ENCODE measurements at regions of chr19 and their contacts with region 1.

Region 1: DNA sequence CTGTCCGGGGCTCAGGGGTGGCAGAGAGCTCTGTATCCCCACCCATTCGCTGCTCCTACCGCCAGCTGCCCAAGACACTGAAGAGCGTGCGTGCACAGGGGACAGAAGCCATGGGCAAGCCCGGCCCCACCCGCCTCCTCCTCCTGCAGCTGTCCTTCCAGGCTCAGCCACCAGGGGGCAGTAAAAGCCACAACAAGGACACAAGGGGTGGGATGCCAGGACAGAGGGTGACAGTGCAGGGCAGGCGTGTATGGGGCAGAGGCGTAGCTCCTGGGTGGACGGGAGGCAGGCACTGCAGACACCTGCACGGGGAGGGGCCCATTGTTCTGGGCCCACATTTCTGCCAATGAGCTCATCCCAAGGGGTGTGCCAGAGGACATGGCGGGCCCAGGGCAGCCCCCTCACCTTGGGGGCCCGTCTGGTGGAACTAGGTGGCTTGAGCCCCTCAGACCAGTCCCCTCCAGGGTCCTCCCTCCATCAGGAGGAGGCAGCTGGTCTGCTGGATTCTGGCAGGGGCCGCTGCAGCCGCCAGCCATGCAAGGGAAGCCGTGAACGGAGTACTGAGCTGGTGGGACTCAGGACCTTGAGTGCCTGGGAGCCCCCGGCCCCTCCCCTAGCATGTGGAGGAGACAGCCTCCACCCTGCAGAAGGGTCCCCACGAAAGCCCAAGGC is 61.1 kb downstream of the MLLT1 start:
- DNase-seq: no peak
- H3K4me3 ChIP-seq: no peak overlapping the region
- CTCF ChIP-seq: peak; percentile 97

Region 2: GRCh38 chr19:6161271-6161850 is 57.3 kb before region 1 on chr19:
- CTCF ChIA-PET with region 1: no interaction called
- POLR2A ChIA-PET with region 1: no interaction called
- DNase-seq: no peak
- H3K4me3 ChIP-seq: no peak overlapping the region
- CTCF ChIP-seq: no peak

Region 3: DNA sequence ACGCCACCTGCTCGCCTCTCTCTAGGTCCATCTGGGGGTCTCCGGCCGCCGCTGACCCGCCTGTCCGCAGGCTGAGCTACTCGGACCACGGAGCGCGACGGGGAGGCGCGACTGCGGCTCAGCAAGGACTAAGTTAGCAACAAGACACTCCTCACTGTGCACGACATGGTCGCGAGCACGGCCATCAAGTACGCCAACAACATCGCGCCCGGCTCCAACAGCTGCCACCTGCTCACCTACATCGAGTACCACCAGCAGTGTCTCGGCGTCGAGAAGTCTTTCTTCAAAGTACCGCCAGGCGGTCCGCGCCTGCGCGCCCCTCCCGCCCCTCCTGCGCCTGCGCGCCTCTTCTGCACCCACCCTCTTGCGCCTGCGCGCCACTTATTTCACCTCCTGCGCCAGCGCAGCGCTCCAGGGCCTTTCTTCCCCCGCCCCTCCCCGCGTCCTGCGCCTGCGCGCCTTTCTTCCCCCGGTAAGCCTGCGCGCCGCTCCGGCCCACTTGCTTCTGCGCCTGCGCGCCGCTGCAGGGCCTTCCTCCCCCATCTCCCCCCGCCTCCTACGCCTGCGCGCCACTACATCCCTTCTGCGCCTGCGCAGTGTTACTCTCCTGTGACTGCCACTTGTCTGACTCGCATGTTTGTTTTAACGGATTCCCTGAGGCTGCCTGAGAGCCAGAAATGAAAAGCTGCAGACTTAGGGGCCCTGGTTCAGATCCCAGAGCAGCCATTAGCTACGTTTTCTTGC is 19.2 kb before region 1 on chr19:
- CTCF ChIA-PET with region 1: interaction called, 34 read pairs
- POLR2A ChIA-PET with region 1: no interaction called
- DNase-seq: peak; percentile 84
- H3K4me3 ChIP-seq: peak overlapping the region; percentile 95
- CTCF ChIP-seq: peak; percentile 22

Region 4: DNA sequence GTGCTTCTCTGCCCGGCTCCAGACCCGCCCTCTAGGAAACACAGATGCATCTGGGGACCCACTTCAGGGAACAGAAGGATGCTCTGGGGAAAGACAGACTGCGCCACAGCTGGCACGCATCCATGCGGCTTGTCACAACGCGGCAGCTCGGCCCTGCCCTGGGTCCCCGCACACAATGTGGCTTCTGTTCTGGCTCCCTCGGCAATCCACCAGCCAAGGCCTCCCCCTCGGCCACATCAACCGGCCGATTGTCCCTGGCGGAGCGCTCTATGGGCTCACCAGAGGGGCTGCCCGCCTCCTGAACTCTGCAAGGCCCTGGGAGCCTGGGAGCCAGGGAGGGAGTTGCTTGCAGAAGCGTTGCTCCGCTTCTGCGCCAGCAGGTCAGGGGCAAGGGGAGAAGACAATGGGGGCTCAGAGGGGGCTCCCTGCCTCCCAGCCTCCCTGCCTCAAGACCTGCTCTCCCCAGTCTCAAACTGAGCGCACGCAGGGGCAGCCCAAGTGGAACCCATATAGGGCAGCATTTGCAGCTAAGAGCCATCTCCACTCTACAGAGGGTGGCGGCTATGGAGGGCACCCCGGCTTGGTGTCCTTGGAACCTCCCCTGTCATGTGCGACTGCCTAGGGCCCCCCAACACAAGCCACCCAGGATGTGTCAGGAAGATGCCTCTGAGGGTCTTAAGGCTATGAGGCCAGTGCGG is 23.2 kb after region 1 on chr19:
- CTCF ChIA-PET with region 1: interaction called, 20 read pairs
- POLR2A ChIA-PET with region 1: no interaction called
- DNase-seq: no peak
- H3K4me3 ChIP-seq: no peak overlapping the region
- CTCF ChIP-seq: no peak

Region 5: DNA sequence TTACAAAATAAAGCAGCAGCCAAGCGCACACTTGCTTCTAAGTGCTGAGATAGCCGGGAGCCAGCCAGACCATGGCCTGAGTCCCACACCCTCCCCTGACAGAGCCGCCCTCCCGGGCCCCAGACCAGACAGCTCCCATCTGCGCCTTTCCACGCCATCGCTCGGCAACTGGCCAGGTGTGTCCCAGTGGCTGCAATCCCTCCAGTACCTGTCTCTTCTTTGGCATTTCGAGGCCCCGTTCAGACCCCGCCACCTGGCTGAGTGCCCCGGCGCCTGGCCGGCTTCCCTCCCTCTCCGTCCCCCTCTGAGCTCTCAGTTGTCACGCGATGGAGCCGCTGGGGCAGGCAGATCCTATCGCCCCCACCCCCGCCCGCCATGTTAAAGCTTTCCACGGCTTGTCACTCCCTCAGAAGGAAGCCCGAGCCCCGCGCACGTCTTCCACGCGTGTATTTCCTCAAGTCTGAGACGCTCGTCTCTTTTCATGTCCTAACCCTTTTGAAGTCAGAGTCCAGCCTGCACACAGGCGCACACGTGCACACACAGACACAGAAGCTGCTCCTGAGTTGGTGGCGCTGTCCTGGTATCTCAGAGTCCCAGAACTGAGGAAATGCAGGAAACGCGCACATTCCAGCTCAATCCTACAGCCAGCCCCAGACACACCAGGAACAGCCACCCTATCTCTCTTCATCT is 53.2 kb after region 1 on chr19:
- CTCF ChIA-PET with region 1: interaction called, 24 read pairs
- POLR2A ChIA-PET with region 1: no interaction called
- DNase-seq: no peak
- H3K4me3 ChIP-seq: peak overlapping the region; percentile 23
- CTCF ChIP-seq: peak; percentile 24

Region 6: DNA sequence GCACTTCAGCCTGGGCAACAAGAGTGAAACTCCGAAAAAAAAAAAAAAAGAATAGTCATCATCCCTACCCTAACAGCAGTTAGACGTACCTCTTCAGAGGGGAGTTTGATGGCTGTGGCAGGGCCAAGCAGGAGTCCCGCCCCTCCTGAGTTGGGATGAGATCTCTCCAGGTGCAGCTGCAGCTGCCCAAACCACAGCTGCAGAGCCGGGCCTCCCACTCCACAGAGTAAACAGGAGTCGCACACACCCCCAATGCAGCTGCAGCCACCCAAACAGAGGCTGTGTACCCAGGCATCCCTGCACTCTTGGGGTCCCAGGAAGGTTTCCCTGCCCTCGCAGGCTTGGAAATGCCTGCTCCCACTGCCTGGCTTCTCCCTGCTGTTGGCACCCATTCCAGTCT is 78.6 kb after region 1 on chr19:
- CTCF ChIA-PET with region 1: interaction called, 179 read pairs
- POLR2A ChIA-PET with region 1: no interaction called
- DNase-seq: no peak
- H3K4me3 ChIP-seq: no peak overlapping the region
- CTCF ChIP-seq: no peak

Region 7: GRCh38 chr19:6354098-6354674 is 135.6 kb after region 1 on chr19:
- CTCF ChIA-PET with region 1: interaction called, 12 read pairs
- POLR2A ChIA-PET with region 1: no interaction called
- DNase-seq: no peak
- H3K4me3 ChIP-seq: no peak overlapping the region
- CTCF ChIP-seq: peak; percentile 27